Activated T-helper 2 cell treated with anti-CD3 and anti-CD28 coated beads, Interferon-gamma antibody, Interleukin-2, Interleukin-4, amounts not matched to agents 10 μg/mL and 5 μg/mL and 100 μg/mL, durations not matched to agents 14 hours and 24 hours and 36 hours (primary cell): ENCODE measurements at regions of chr1 and their contacts with region 1.

Region 1: DNA sequence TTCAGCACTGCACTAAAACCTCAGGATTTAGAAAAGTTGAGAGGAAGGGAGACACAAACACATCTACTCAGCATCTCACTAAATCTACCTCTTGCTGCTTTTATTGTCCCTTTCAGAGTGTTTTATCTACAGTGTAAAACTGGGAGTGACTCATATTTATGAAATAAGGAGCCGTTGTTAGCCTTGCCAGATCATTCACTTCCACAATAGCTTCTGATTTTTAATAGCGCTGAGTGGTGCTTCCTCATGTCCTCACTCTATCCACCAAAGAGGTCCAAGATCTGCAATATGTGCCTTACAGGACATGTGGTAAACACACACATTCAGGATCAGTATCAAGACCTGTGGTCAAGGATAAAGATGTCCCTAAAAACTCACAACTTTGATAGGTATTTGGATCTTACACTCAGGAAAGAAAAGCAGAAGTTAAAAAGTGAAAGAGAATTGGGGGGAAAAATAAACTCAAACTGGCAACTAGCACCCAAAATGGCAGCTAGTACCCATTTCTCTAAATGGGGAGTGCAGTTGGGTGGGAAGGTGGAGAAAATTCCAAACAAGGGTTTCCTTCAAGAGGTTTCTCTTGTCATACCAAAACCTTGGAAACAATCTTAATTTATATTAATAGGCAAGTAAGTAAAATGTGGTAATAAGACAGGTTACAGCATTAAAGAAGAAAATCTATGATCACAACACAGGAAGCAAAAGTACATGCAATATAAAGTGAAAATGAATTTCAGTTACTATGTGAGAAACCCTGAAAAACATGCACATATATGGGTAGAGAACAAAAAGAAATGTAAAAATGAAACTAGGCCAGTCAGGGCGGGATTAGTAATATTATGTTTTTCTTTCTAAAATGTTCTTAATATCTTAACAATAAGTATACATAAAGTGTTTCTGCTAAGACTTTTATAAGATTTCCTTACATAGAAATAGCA is 15.9 kb downstream of the DUSP10 start:
- DNase-seq: no peak
- H3K4me3 Mint-ChIP-seq: peak overlapping the region; percentile 69
- H3K27ac Mint-ChIP-seq: peak overlapping the region; percentile 95
- H3K4me1 Mint-ChIP-seq: peaks cover 84% of the 10 kb centered on the region
- H3K27me3 Mint-ChIP-seq: no peaks in the 10 kb centered on the region

Region 2: DNA sequence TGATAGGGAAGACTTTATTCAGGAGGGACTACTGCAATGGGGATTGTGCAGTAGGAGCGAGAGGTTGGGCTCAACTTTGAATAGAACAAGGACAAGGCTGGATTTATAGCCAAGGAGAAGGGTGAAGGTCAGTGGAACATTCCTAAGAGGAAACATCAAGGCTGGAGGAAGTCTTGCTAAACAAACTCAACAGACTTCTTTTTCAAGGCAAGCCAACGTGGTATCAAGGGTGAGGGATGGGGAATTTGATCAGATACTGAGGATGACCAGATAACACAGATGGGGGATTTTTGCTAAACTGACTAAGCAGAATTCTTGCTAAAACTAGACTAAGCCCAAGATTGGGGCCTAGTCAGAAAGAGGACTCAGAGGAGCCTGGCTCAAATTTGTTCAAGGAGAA is 91.4 kb before region 1 on chr1:
- intact Hi-C with region 1: loop called (anchors 5 kb)
- DNase-seq: no peak
- H3K4me3 Mint-ChIP-seq: no peak overlapping the region
- H3K27ac Mint-ChIP-seq: no peak overlapping the region
- H3K4me1 Mint-ChIP-seq: peaks cover 14% of the 10 kb centered on the region
- H3K27me3 Mint-ChIP-seq: no peaks in the 10 kb centered on the region

Region 3: GRCh38 chr1:221687836-221688487 is 38.0 kb before region 1 on chr1:
- intact Hi-C with region 1: loop called (anchors 2 kb)
- DNase-seq: no peak
- H3K4me3 Mint-ChIP-seq: peak overlapping the region; percentile 20
- H3K27ac Mint-ChIP-seq: peak overlapping the region; percentile 71
- H3K4me1 Mint-ChIP-seq: peaks cover 43% of the 10 kb centered on the region
- H3K27me3 Mint-ChIP-seq: no peaks in the 10 kb centered on the region

Region 4: GRCh38 chr1:221736714-221737113 is 10.7 kb after region 1 on chr1:
- intact Hi-C with region 1: loop called (anchors 1 kb)
- DNase-seq: no peak
- H3K4me3 Mint-ChIP-seq: no peak overlapping the region
- H3K27ac Mint-ChIP-seq: no peak overlapping the region
- H3K4me1 Mint-ChIP-seq: peaks cover 69% of the 10 kb centered on the region
- H3K27me3 Mint-ChIP-seq: no peaks in the 10 kb centered on the region